ENCODE measurements at regions of chr4 and their contacts with region 1.

Region 1: GRCh38 chr4:106369456-106370060 is 980 bp upstream of the GIMD1 start:
- DNase-seq: peak; percentile 86
- H3K4me3 ChIP-seq: no peak overlapping the region
- H3K27ac ChIP-seq: no peak overlapping the region
- H3K4me1 ChIP-seq: peaks cover 10% of the 10 kb centered on the region
- H3K27me3 ChIP-seq: no peaks in the 10 kb centered on the region
- CTCF ChIP-seq: peak; percentile 78

Region 2: GRCh38 chr4:105113800-105114199 is 1255.8 kb before region 1 on chr4:
- CTCF ChIA-PET with region 1: no interaction called
- POLR2A ChIA-PET with region 1: no interaction called
- intact Hi-C with region 1: no loop called
- DNase-seq: no peak
- H3K4me3 ChIP-seq: no peak overlapping the region
- H3K27ac ChIP-seq: no peak overlapping the region
- H3K4me1 ChIP-seq: no peaks in the 10 kb centered on the region
- H3K27me3 ChIP-seq: no peaks in the 10 kb centered on the region
- CTCF ChIP-seq: no peak

Region 3: GRCh38 chr4:106266201-106266600 is 103.4 kb before region 1 on chr4:
- CTCF ChIA-PET with region 1: no interaction called
- POLR2A ChIA-PET with region 1: no interaction called
- intact Hi-C with region 1: loop called (anchors 5 kb)
- DNase-seq: peak; percentile 79
- H3K4me3 ChIP-seq: no peak overlapping the region
- H3K27ac ChIP-seq: no peak overlapping the region
- H3K4me1 ChIP-seq: peaks cover 13% of the 10 kb centered on the region
- H3K27me3 ChIP-seq: no peaks in the 10 kb centered on the region
- CTCF ChIP-seq: peak; percentile 72

Region 4: DNA sequence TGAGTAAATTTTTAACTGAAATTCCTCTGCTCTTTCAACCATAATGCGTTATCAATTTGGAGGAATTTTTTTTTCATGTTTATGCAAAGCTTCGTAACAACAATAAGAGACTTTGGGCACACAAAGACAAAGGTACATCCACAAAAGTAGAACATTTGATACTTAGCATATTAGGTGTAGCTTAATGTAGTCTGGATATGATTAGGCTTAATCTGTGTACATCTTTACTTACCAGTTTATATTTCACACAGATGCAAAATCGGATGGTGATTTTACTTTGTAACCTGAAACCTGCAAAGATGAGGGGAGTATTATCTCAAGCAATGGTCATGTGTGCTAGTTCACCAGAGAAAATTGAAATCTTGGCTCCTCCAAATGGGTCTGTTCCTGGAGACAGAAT is 32.9 kb before region 1 on chr4:
- CTCF ChIA-PET with region 1: no interaction called
- POLR2A ChIA-PET with region 1: no interaction called
- intact Hi-C with region 1: loop called (anchors 1 kb)
- DNase-seq: no peak
- H3K4me3 ChIP-seq: no peak overlapping the region
- H3K27ac ChIP-seq: no peak overlapping the region
- H3K4me1 ChIP-seq: no peaks in the 10 kb centered on the region
- H3K27me3 ChIP-seq: no peaks in the 10 kb centered on the region
- CTCF ChIP-seq: no peak

Region 5: GRCh38 chr4:106659371-106659770 is 289.8 kb after region 1 on chr4:
- CTCF ChIA-PET with region 1: no interaction called
- POLR2A ChIA-PET with region 1: no interaction called
- intact Hi-C with region 1: loop called (anchors 10 kb)
- DNase-seq: peak; percentile 94
- H3K4me3 ChIP-seq: no peak overlapping the region
- H3K27ac ChIP-seq: peak overlapping the region; percentile 76
- H3K4me1 ChIP-seq: peaks cover 29% of the 10 kb centered on the region
- H3K27me3 ChIP-seq: no peaks in the 10 kb centered on the region
- CTCF ChIP-seq: no peak

Region 6: DNA sequence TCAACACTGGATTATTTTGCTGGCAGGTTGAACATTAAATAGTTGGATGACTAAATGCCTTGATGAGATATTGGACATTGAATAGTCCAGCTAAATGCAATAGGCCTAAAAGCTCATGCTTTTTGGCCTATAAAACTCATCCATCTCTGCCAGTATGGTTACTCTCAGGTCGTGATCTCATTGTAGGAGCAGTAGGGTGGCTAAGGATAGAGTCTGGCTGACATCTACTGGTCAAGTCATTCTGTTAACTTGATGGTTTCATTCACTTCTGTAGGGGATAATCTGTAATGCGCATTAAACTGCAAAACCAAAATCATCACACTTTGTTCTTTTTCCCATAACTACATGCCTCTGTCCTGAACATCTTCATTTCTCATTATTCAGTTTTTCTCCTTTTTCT is 439.5 kb after region 1 on chr4:
- CTCF ChIA-PET with region 1: interaction called, 5 read pairs
- POLR2A ChIA-PET with region 1: no interaction called
- intact Hi-C with region 1: loop called (anchors 2 kb)
- DNase-seq: peak; percentile 71
- H3K4me3 ChIP-seq: no peak overlapping the region
- H3K27ac ChIP-seq: no peak overlapping the region
- H3K4me1 ChIP-seq: no peaks in the 10 kb centered on the region
- H3K27me3 ChIP-seq: no peaks in the 10 kb centered on the region
- CTCF ChIP-seq: peak; percentile 60

Region 7: DNA sequence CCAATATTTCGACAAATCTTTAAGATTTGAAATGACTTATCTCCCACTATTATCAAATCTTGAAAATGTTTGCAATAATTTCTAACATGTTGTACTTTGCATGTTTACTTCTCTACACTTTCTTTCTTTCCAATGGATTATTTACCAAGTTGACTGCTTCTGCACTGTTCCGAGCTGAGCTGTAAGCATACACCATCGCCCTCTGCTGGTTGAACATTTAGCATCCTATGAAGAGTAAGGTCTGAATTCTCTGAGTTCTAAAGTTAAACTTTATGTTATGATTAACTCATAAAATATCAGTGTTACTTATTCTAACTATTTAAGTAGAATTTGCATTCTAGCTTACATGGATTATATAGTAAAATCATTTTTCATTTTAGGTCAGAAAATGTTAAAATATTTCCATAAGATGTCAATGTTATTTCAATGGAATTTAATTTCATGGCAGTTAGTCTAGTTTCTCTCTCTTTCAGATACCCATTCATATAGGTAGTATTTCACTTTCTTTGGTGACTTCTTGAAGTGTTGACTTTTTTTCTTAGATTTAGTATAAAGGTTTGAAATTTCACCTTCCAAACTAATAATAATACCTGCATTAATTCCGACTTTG is 529.2 kb after region 1 on chr4:
- CTCF ChIA-PET with region 1: interaction called, 5 read pairs
- POLR2A ChIA-PET with region 1: no interaction called
- intact Hi-C with region 1: loop called (anchors 2 kb)
- DNase-seq: peak; percentile 81
- H3K4me3 ChIP-seq: no peak overlapping the region
- H3K27ac ChIP-seq: no peak overlapping the region
- H3K4me1 ChIP-seq: no peaks in the 10 kb centered on the region
- H3K27me3 ChIP-seq: no peaks in the 10 kb centered on the region
- CTCF ChIP-seq: peak; percentile 95